Endothelial cell of umbilical vein (primary cell): ENCODE measurements at regions of chr1 and their contacts with region 1.

Region 1: DNA sequence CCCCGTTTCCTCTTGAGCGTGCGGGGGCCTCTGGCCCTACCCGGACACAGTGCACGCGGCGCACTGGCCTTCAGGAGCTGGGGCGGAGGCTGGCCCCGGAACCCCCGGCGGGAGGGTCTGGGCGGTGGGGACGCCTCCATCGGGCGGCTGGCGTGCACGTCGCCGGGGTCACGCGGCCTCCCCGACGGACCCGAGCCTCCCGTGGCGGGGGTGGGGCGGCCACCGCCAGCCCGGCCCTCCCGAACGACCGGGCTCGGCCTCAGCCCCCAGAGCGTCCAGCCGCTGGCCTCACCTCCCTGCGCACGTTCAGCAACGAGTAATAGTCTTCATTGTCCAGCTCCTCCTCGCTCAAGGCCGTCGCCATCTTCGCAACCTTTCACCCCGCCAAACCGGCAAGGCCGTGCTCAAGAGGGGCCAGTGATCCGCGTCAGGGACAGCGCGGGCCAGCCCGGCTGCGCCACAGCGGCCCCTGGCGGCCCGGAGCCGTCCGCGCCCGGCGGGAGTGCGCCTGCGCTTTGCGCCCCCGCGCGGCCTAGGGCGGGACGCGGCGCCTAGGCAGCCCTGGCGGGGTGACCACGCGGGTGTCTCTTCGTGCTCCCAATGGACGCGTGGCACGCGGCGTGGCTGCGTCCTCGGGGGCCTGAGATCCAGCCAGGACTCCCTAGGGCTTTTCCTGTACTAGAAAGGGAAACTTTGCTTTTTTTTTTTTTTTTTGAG is at the start of gene DNAJC11:
- DNase-seq: peak; percentile 86
- H3K4me3 ChIP-seq: peak within 1 kb of the TSS; percentile 77 to 91 (median 80)
- H3K27ac ChIP-seq: peak within 1 kb of the TSS; percentile 59
- H3K4me1 ChIP-seq: peaks cover 9% of the 10 kb centered on the region
- H3K27me3 ChIP-seq: no peaks in the 10 kb centered on the region
- CTCF ChIP-seq: peak; percentile 71 to 100
- POLR2A ChIP-seq: peak; percentile 65
- total RNA-seq, gene DNAJC11: 64.3 and 65.9 TPM in 2 replicates

Region 2: DNA sequence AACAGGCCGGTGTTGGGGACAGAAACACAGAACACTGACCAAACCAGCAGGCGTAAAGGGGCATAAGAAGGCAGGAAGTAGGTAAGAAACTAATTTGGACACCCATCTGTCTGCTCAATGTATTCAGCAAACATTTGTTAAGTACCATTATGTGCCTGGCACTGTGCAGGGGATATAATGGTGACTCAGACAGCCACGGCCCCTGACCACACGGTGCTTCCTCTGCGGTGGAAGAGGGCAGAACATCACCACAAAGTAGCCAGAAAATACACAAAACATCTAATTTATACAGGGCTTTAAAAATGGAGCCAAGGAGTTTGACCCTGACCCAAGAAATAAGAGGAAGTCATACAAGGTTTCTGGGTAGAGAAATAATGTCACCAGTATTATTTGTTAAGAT is 12.8 kb before region 1 on chr1:
- CTCF ChIA-PET with region 1: interaction called, 12 read pairs
- POLR2A ChIA-PET with region 1: no interaction called
- dilution Hi-C with region 1: no loop called
- intact Hi-C with region 1: no loop called
- DNase-seq: no peak
- H3K4me3 ChIP-seq: no peak overlapping the region
- H3K27ac ChIP-seq: no peak overlapping the region
- H3K4me1 ChIP-seq: peaks cover 11% of the 10 kb centered on the region
- H3K27me3 ChIP-seq: no peaks in the 10 kb centered on the region
- CTCF ChIP-seq: no peak
- POLR2A ChIP-seq: no peak